Naive thymus-derived CD4-positive, alpha-beta T cell (primary cell): ENCODE measurements at regions of chr10 and their contacts with region 1.

Region 1: GRCh38 chr10:72692057-72692910 is at the start of gene MCU:
- DNase-seq: peak; percentile 85 to 94 (median 91)
- ATAC-seq: peak; percentile 98
- H3K4me3 ChIP-seq: peak within 1 kb of the TSS; percentile 86
- H3K4me3 Mint-ChIP-seq: peak within 1 kb of the TSS; percentile 84 to 93 (median 91)
- H3K27ac ChIP-seq: peak within 1 kb of the TSS; percentile 68
- H3K27ac Mint-ChIP-seq: peak within 1 kb of the TSS; percentile 5 to 93 (median 76)
- H3K4me1 ChIP-seq: peaks cover 11 to 12% of the 10 kb centered on the region in 2 donors
- H3K4me1 Mint-ChIP-seq: peaks cover 9 to 39% (median 32%) of the 10 kb centered on the region in 7 donors
- H3K27me3 ChIP-seq: no peaks in the 10 kb centered on the region
- H3K27me3 Mint-ChIP-seq: peaks cover 0 to 6% (median 0%) of the 10 kb centered on the region in 5 donors
- total RNA-seq, gene MCU: 7.7 to 14.3 (median 12.7) TPM

Region 2: GRCh38 chr10:72567884-72568640 is 124.2 kb before region 1 on chr10:
- CTCF ChIA-PET with region 1: no interaction called
- POLR2A ChIA-PET with region 1: no interaction called
- intact Hi-C with region 1: loop called in 1 of 2 experiments (anchors 5 kb)
- DNase-seq: no peak
- ATAC-seq: no peak
- H3K4me3 ChIP-seq: no peak overlapping the region
- H3K4me3 Mint-ChIP-seq: no peak overlapping the region
- H3K27ac ChIP-seq: no peak overlapping the region
- H3K27ac Mint-ChIP-seq: peak overlapping the region in 1 of 9 donors; percentile 12
- H3K4me1 ChIP-seq: peaks cover 0 to 4% of the 10 kb centered on the region in 2 donors
- H3K4me1 Mint-ChIP-seq: peaks cover 5 to 19% (median 12%) of the 10 kb centered on the region in 7 donors
- H3K27me3 ChIP-seq: no peaks in the 10 kb centered on the region
- H3K27me3 Mint-ChIP-seq: no peaks in the 10 kb centered on the region

Region 3: DNA sequence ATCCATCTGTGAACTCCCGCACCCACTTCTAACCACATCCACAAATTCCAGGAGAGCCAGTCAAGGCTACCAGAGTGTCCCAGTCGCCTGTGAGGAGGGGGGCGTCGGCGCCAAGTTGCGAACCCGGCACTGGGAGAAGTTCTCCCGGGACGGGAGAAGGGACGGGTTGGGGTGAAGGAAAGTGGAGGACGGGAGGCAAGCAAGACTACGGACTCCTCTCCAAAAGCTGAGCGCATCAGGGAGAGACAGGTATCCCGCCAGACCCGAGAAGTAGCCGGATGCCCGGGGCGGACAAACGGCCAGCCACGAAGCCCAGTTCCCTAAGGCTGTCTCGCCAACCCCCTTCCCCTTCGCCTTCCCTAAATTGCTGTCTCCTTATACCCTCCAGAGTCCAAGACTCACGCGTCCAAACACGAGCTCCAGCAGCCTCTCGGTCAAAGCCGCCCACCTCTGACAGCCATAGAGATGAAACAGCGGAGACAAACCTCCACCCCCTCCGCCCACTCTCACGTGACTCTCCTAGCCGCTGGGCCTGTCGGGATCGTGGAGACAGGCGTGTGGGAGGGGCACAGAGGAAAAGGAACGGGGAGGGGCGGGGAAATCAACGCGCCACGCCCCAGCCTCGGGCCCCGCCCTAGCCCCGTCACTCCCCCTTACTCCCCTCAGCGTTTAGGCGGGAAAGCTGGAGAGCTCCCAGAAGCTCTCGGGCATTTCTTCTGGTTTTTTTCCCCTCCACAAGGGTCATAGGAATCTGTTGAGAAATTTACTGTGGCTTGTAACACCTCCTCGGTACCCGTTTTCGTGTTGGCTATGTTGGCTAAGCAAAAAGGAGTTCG is 66.5 kb before region 1 on chr10 and contains the start of gene MICU1:
- CTCF ChIA-PET with region 1: no interaction called
- POLR2A ChIA-PET with region 1: interaction called, 5 read pairs
- intact Hi-C with region 1: loop called (anchors 1 kb)
- DNase-seq: peak; percentile 74 to 93 (median 90)
- ATAC-seq: peak; percentile 100
- H3K4me3 ChIP-seq: peak within 1 kb of the TSS; percentile 97
- H3K4me3 Mint-ChIP-seq: peak within 1 kb of the TSS; percentile 97 to 100 (median 100)
- H3K27ac ChIP-seq: peak within 1 kb of the TSS; percentile 76
- H3K27ac Mint-ChIP-seq: peak within 1 kb of the TSS; percentile 83 to 99 (median 97)
- H3K4me1 ChIP-seq: peaks cover 11 to 16% of the 10 kb centered on the region in 2 donors
- H3K4me1 Mint-ChIP-seq: peaks cover 11 to 28% (median 16%) of the 10 kb centered on the region in 7 donors
- H3K27me3 ChIP-seq: no peaks in the 10 kb centered on the region
- H3K27me3 Mint-ChIP-seq: peaks cover 0 to 8% (median 0%) of the 10 kb centered on the region in 5 donors
- total RNA-seq, gene MICU1: 20.8 to 39.6 (median 26.3) TPM

Region 4: DNA sequence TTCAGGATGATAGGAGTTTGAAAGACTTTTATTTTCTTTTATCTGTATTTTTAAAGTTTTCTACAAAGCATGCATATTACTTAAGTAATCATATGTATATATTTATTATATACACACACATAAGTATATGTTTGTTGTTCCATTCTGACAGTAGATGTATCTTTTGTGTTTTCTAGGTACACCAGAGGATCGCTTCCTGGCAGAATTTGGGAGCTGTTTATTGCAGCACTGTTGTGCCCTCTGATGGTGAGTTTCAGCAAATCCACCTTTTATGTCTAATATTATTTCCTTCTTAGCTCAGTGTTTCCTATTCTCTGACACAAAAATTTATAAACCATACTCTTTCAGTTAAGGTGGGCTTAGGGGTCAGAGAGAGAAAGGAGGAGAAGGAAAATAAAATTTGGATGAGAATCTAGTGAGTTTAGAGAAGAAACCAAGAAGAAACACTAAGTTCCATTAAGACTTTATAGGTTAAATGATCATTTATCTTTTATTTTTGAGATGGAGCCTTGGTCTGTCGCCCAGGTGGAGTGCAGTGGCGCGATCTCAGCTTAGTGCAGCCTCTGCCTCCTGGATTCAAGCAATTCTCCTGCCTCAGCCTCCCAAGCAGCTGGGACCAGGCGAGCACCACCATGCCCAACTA is 142.0 kb after region 1 on chr10:
- CTCF ChIA-PET with region 1: interaction called, 3 read pairs
- POLR2A ChIA-PET with region 1: no interaction called
- intact Hi-C with region 1: loop called (anchors 1 kb)
- DNase-seq: peak in 7 of 9 donors; percentile 28 to 61 (median 43)
- ATAC-seq: peak; percentile 73
- H3K4me3 ChIP-seq: no peak overlapping the region
- H3K4me3 Mint-ChIP-seq: no peak overlapping the region
- H3K27ac ChIP-seq: no peak overlapping the region
- H3K27ac Mint-ChIP-seq: no peak overlapping the region
- H3K4me1 ChIP-seq: no peaks in the 10 kb centered on the region
- H3K4me1 Mint-ChIP-seq: peaks cover 0 to 1% (median 0%) of the 10 kb centered on the region in 7 donors
- H3K27me3 ChIP-seq: no peaks in the 10 kb centered on the region
- H3K27me3 Mint-ChIP-seq: no peaks in the 10 kb centered on the region

Region 5: DNA sequence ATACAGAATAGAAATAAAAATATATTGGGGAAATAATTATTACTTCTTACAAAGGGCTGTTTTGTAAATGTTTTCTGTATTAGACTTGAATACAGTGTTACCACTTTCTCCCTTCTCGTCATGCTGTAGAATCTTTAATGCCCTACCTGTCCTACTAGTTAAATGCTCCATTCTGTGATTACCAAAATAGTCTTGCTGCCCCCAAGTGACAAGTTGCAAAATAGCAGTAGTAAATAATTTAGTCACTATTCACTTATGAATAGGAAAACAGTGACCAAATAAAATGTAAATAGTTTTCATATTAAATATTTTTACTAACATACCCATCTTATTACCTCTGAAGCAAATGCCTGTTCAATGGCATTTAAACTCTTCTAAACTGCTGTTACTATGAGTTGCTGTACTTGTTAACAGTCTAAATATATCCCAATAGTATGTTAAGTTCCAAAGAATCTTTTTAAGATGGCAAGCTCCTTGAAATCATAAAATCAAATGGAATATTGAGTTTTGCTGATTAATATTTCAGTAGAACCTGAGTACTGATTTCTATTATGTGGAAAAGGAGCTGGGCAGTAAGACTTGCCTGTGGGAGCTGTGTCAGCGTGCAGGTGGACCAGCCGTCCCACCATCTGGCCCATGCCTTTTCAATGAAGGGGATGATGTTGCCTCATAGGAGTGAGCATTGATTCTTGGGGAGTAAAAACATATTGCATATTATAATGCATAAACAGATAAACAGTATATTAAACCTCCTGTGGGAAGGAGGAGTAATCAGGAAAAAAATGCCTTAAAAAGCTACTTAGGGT is 183.2 kb after region 1 on chr10:
- CTCF ChIA-PET with region 1: no interaction called
- POLR2A ChIA-PET with region 1: no interaction called
- intact Hi-C with region 1: loop called in 1 of 2 experiments (anchors 1 kb)
- DNase-seq: peak in 4 of 9 donors; percentile 16 to 28 (median 19)
- ATAC-seq: no peak
- H3K4me3 ChIP-seq: no peak overlapping the region
- H3K4me3 Mint-ChIP-seq: no peak overlapping the region
- H3K27ac ChIP-seq: no peak overlapping the region
- H3K27ac Mint-ChIP-seq: no peak overlapping the region
- H3K4me1 ChIP-seq: no peaks in the 10 kb centered on the region
- H3K4me1 Mint-ChIP-seq: peaks cover 0 to 3% (median 0%) of the 10 kb centered on the region in 7 donors
- H3K27me3 ChIP-seq: no peaks in the 10 kb centered on the region
- H3K27me3 Mint-ChIP-seq: no peaks in the 10 kb centered on the region

Region 6: DNA sequence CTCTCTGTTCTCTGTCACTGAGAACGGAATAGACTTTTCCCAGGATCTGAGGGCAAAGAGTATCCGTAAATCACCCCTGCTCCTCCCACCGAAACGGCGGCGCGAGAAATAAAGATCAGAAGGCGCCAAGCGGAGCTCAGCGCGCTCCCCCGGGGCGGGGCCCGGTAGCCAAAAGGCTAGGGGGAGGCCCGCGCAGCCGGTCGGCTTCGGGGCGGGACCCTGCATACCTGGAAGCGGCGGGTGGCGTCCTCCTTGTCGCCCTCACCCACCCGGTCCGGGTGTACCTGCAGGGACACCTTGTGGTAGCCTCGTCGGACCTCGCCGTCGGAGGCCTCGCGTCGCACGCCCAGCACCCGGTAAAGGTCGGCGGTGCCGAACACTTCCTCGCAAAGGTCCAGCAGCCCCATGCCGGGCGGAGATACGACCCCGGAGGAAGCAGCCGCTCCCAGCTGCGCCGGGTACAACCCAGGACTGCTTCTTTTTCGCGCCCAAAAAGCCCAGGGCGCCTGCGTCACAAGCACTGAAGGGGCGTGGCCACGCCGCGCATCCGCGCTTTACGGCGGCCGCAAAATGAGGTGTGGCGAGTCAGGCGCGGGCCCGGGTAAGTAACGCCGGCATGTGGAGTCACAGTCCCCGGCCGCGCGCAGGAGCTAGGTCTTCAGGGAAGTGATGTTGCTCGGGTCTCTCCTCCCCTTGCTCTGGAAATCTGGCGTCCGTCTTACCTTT is 554.7 kb after region 1 on chr10 and contains the start of gene DNAJC9:
- CTCF ChIA-PET with region 1: no interaction called
- POLR2A ChIA-PET with region 1: no interaction called
- intact Hi-C with region 1: loop called in 1 of 2 experiments (anchors 5 kb)
- DNase-seq: peak; percentile 93 to 98 (median 96)
- ATAC-seq: peak; percentile 95
- H3K4me3 ChIP-seq: peak within 1 kb of the TSS; percentile 71
- H3K4me3 Mint-ChIP-seq: peak within 1 kb of the TSS; percentile 92 to 100 (median 97)
- H3K27ac ChIP-seq: peak within 1 kb of the TSS; percentile 86
- H3K27ac Mint-ChIP-seq: peak within 1 kb of the TSS; percentile 91 to 98 (median 96)
- H3K4me1 ChIP-seq: peaks cover 27 to 37% of the 10 kb centered on the region in 2 donors
- H3K4me1 Mint-ChIP-seq: peaks cover 30 to 69% (median 55%) of the 10 kb centered on the region in 7 donors
- H3K27me3 ChIP-seq: no peaks in the 10 kb centered on the region
- H3K27me3 Mint-ChIP-seq: no peaks in the 10 kb centered on the region
- total RNA-seq, gene DNAJC9: 14.5 to 47.7 (median 26.8) TPM